ENCODE measurements at regions of chr15 and their contacts with region 1.

Region 1: GRCh38 chr15:62389885-62390790 is 225.1 kb upstream of the C2CD4B start:
- DNase-seq: peak; percentile 60 to 80
- H3K4me3 ChIP-seq: peak within 1 kb of the TSS; percentile 97
- H3K4me3 Mint-ChIP-seq: peak within 1 kb of the TSS; percentile 95
- H3K27ac Mint-ChIP-seq: peak within 1 kb of the TSS; percentile 93
- H3K4me1 ChIP-seq: peaks cover 28% of the 10 kb centered on the region
- H3K4me1 Mint-ChIP-seq: peaks cover 15% of the 10 kb centered on the region
- H3K27me3 ChIP-seq: no peaks in the 10 kb centered on the region
- H3K27me3 Mint-ChIP-seq: no peaks in the 10 kb centered on the region
- CTCF ChIP-seq: no peak

Region 2: GRCh38 chr15:62142731-62143130 is 247.4 kb before region 1 on chr15:
- CTCF ChIA-PET with region 1: no interaction called
- POLR2A ChIA-PET with region 1: no interaction called
- intact Hi-C with region 1: no loop called
- DNase-seq: no peak
- H3K4me3 ChIP-seq: no peak overlapping the region
- H3K4me3 Mint-ChIP-seq: no peak overlapping the region
- H3K27ac Mint-ChIP-seq: no peak overlapping the region
- H3K4me1 ChIP-seq: peaks cover 19% of the 10 kb centered on the region; the same call in 1 of the 2 replicates
- H3K4me1 Mint-ChIP-seq: peaks cover 13% of the 10 kb centered on the region
- H3K27me3 ChIP-seq: no peaks in the 10 kb centered on the region
- H3K27me3 Mint-ChIP-seq: no peaks in the 10 kb centered on the region
- CTCF ChIP-seq: peak in 1 of 2 experiments; percentile 2

Region 3: DNA sequence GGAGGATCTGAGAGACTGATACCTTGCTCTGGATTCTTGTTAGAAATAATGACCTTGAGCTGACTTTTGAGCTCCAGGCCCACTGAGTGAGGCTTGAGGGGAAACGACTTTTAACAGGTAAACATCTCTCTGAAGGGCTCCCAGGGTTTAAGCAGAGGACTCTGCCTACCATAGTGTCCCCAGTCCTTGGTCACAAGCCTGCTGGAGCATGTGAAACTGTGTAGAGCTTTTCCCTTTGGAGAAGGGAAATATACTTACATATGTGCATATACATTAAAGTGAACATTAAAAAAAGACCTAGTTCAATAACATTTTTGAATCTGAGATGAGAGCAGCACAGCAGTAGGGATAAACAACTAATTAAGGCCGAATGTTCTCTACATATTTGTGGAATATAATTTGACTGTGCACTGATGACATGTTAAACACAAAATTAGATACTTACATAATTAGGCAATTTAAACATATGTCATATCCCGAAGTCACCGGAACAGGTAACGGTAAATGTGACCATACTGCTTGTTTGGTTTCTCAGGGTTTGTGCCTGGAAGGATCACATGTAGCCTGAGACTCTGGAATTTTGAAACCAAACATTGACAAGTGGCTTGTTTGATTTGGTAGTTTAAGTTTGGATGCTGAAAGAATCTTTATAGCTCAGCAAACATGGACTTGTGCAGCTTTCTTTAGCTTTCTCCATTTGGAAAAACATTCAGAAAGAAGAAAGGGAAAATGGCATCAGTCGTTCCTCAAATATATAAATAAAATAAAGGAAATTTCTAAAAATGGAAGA is 41.1 kb after region 1 on chr15:
- CTCF ChIA-PET with region 1: interaction called, 5 read pairs
- POLR2A ChIA-PET with region 1: interaction called, 4 read pairs
- intact Hi-C with region 1: loop called (anchors 1 kb)
- DNase-seq: peak in 1 of 2 experiments; percentile 42
- H3K4me3 ChIP-seq: no peak overlapping the region
- H3K4me3 Mint-ChIP-seq: peak overlapping the region; percentile 8
- H3K27ac Mint-ChIP-seq: peak overlapping the region; percentile 82
- H3K4me1 ChIP-seq: peaks cover 50% of the 10 kb centered on the region
- H3K4me1 Mint-ChIP-seq: peaks cover 24% of the 10 kb centered on the region
- H3K27me3 ChIP-seq: no peaks in the 10 kb centered on the region
- H3K27me3 Mint-ChIP-seq: no peaks in the 10 kb centered on the region
- CTCF ChIP-seq: no peak

Region 4: DNA sequence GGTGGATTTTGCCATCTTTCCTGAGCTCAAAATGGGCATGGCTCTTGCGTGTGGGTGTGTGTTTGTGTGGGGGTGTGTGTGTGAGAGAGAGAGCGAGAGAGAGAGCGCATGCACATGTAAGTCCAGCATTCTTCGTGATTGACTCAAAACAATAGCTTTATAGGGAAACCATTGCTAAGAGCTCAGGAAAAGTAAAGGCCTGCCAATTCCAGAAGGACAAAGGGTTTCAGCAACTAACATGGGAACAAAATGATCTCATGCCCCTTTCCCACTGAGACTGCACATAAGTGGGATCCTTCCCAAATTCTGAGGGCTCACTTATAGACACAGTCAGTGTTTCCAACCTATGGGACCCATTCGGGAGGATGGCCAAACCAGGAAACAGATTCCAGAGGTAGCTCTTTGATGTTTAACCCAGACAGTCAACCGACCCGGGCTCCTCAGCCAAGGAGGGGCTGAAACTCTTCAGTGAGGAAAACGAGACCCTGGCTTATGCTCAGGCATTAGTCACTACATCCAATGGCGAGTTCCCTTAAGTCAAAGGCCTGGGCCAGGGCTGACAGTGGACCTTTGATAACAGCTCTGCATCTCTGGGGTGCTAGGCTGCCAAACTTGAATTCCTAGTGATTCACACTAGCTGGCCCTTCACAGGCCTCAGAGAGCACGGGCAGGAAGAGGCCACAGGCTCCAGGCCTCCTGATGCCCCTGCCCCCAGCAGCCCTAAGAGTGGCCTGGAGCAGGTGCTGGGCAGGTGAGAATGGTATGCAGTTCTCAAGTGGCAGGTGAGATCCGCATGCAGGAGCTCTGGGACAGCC is 79.9 kb after region 1 on chr15:
- CTCF ChIA-PET with region 1: no interaction called
- POLR2A ChIA-PET with region 1: interaction called, 4 read pairs
- intact Hi-C with region 1: loop called (anchors 5 kb)
- DNase-seq: no peak
- H3K4me3 ChIP-seq: no peak overlapping the region
- H3K4me3 Mint-ChIP-seq: no peak overlapping the region
- H3K27ac Mint-ChIP-seq: peak overlapping the region; percentile 13
- H3K4me1 ChIP-seq: peaks cover 38% of the 10 kb centered on the region
- H3K4me1 Mint-ChIP-seq: peaks cover 46% of the 10 kb centered on the region
- H3K27me3 ChIP-seq: no peaks in the 10 kb centered on the region
- H3K27me3 Mint-ChIP-seq: no peaks in the 10 kb centered on the region
- CTCF ChIP-seq: no peak

Region 5: GRCh38 chr15:62495670-62496614 is 105.8 kb after region 1 on chr15:
- CTCF ChIA-PET with region 1: interaction called, 3 read pairs
- POLR2A ChIA-PET with region 1: no interaction called
- intact Hi-C with region 1: loop called (anchors 5 kb)
- DNase-seq: no peak
- H3K4me3 ChIP-seq: no peak overlapping the region
- H3K4me3 Mint-ChIP-seq: peak overlapping the region; percentile 15
- H3K27ac Mint-ChIP-seq: peak overlapping the region; percentile 39
- H3K4me1 ChIP-seq: peaks cover 73% of the 10 kb centered on the region
- H3K4me1 Mint-ChIP-seq: peaks cover 59% of the 10 kb centered on the region
- H3K27me3 ChIP-seq: no peaks in the 10 kb centered on the region
- H3K27me3 Mint-ChIP-seq: no peaks in the 10 kb centered on the region
- CTCF ChIP-seq: no peak

Region 6: GRCh38 chr15:62549345-62549970 is 159.3 kb after region 1 on chr15:
- CTCF ChIA-PET with region 1: interaction called, 9 read pairs
- POLR2A ChIA-PET with region 1: no interaction called
- intact Hi-C with region 1: loop called (anchors 2 kb)
- DNase-seq: peak in 1 of 2 experiments; percentile 48
- H3K4me3 ChIP-seq: no peak overlapping the region
- H3K4me3 Mint-ChIP-seq: no peak overlapping the region
- H3K27ac Mint-ChIP-seq: peak overlapping the region; percentile 13
- H3K4me1 ChIP-seq: peaks cover 34% of the 10 kb centered on the region
- H3K4me1 Mint-ChIP-seq: peaks cover 7% of the 10 kb centered on the region
- H3K27me3 ChIP-seq: no peaks in the 10 kb centered on the region
- H3K27me3 Mint-ChIP-seq: no peaks in the 10 kb centered on the region
- CTCF ChIP-seq: peak; percentile 43 to 60

Region 7: GRCh38 chr15:62770752-62771151 is 380.6 kb after region 1 on chr15:
- CTCF ChIA-PET with region 1: no interaction called
- POLR2A ChIA-PET with region 1: no interaction called
- intact Hi-C with region 1: no loop called
- DNase-seq: no peak
- H3K4me3 ChIP-seq: no peak overlapping the region
- H3K4me3 Mint-ChIP-seq: no peak overlapping the region
- H3K27ac Mint-ChIP-seq: no peak overlapping the region
- H3K4me1 ChIP-seq: no peaks in the 10 kb centered on the region
- H3K4me1 Mint-ChIP-seq: no peaks in the 10 kb centered on the region
- H3K27me3 ChIP-seq: no peaks in the 10 kb centered on the region
- H3K27me3 Mint-ChIP-seq: no peaks in the 10 kb centered on the region
- CTCF ChIP-seq: no peak